Activated naive CD4-positive, alpha-beta T cell treated with anti-CD3 and anti-CD28 coated beads for 36 hours (primary cell): ENCODE measurements at regions of chr5 and their contacts with region 1.

Region 1: GRCh38 chr5:178859625-178860531 is at the start of gene ZNF354B:
- DNase-seq: peak; percentile 91
- H3K4me3 Mint-ChIP-seq: peak within 1 kb of the TSS; percentile 89
- H3K27ac Mint-ChIP-seq: peak within 1 kb of the TSS; percentile 66
- H3K4me1 Mint-ChIP-seq: peaks cover 21% of the 10 kb centered on the region
- H3K27me3 Mint-ChIP-seq: no peaks in the 10 kb centered on the region
- total RNA-seq, gene ZNF354B: 8.6 to 8.9 TPM

Region 2: GRCh38 chr5:179023528-179024430 is 163.9 kb after region 1 on chr5 and contains the start of gene ZNF879:
- CTCF ChIA-PET with region 1: no interaction called
- intact Hi-C with region 1: loop called (anchors 1 kb)
- DNase-seq: peak; percentile 95
- H3K4me3 Mint-ChIP-seq: peak within 1 kb of the TSS; percentile 97
- H3K27ac Mint-ChIP-seq: peak within 1 kb of the TSS; percentile 90
- H3K4me1 Mint-ChIP-seq: peaks cover 7% of the 10 kb centered on the region
- H3K27me3 Mint-ChIP-seq: peaks cover 1% of the 10 kb centered on the region
- total RNA-seq, gene ZNF879: 1.8 to 2.0 TPM